ENCODE measurements at regions of chr1 and their contacts with region 1.

Region 1: GRCh38 chr1:45246760-45247159 is 40.4 kb upstream of the ZSWIM5 start:
- DNase-seq: peak; percentile 11
- H3K4me3 Mint-ChIP-seq: no peak overlapping the region
- H3K27ac Mint-ChIP-seq: peak overlapping the region; percentile 88
- H3K4me1 Mint-ChIP-seq: peaks cover 15% of the 10 kb centered on the region
- H3K27me3 Mint-ChIP-seq: peaks cover 5% of the 10 kb centered on the region

Region 2: GRCh38 chr1:45205910-45206721 is 40.6 kb before region 1 on chr1 and contains the start of gene ZSWIM5:
- CTCF ChIA-PET with region 1: no interaction called
- POLR2A ChIA-PET with region 1: no interaction called
- intact Hi-C with region 1: loop called (anchors 2 kb)
- DNase-seq: peak; percentile 71
- H3K4me3 Mint-ChIP-seq: peak within 1 kb of the TSS; percentile 83
- H3K27ac Mint-ChIP-seq: peak within 1 kb of the TSS; percentile 57
- H3K4me1 Mint-ChIP-seq: peaks cover 35% of the 10 kb centered on the region
- H3K27me3 Mint-ChIP-seq: no peaks in the 10 kb centered on the region
- total RNA-seq, gene ZSWIM5: 0.51 to 0.59 TPM

Measured in activated CD4-positive, alpha-beta memory T cell treated with anti-CD3 and anti-CD28 coated beads for 36 hours (primary cell).